Activated CD8-positive, alpha-beta memory T cell treated with anti-CD3 and anti-CD28 coated beads, Interleukin-2, amount 10 ng/mL, durations not matched to agents 7 days and 5 days (primary cell): ENCODE measurements at regions of chr6 and their contacts with region 1.

Region 1: DNA sequence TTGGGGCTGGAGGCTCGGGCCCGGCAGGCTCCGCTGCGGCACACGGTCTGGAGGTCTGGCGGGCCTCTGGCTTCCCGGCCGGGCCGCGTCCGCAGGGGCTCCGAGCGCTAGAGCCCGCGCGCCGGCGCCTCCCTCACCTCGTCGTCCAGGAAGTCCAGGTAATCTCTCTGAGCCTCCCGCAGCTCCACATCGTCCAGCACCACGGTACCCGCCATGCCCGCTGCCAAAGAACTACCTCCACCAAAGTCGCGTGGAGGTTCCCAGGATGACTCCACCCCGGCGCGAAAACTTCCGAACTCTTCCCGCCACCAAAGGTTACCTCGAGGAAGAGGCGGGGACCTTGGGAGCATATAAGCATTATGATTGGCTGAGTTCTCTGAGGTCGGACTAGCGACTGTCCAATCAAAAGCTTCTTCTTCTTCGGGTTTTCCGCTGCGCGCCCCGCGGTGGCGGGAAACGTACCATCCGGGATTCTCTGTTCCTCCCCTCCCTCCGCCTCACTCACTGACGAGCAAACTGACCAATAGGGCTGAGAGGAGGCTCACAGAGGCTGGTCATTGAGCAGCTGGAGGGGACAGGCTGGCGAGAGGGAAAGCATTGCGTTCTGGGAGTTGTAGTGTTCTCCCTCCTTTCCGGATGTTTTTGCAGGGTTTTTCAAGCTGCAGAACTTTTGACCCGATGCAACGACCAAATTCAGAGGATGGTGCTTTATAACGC is at the start of gene MCM3:
- DNase-seq: peak; percentile 99
- ATAC-seq: peak; percentile 97
- H3K4me3 Mint-ChIP-seq: no peak within 1 kb of the TSS
- H3K27ac Mint-ChIP-seq: peak within 1 kb of the TSS; percentile 42
- H3K4me1 Mint-ChIP-seq: peaks cover 54% of the 10 kb centered on the region
- H3K27me3 Mint-ChIP-seq: no peaks in the 10 kb centered on the region
- total RNA-seq, gene MCM3: 248 to 262 TPM

Region 2: GRCh38 chr6:52130440-52130839 is 154.2 kb before region 1 on chr6:
- CTCF ChIA-PET with region 1: no interaction called
- DNase-seq: no peak
- ATAC-seq: no peak
- H3K4me3 Mint-ChIP-seq: no peak overlapping the region
- H3K27ac Mint-ChIP-seq: no peak overlapping the region
- H3K4me1 Mint-ChIP-seq: no peaks in the 10 kb centered on the region
- H3K27me3 Mint-ChIP-seq: peaks cover 33% of the 10 kb centered on the region

Region 3: DNA sequence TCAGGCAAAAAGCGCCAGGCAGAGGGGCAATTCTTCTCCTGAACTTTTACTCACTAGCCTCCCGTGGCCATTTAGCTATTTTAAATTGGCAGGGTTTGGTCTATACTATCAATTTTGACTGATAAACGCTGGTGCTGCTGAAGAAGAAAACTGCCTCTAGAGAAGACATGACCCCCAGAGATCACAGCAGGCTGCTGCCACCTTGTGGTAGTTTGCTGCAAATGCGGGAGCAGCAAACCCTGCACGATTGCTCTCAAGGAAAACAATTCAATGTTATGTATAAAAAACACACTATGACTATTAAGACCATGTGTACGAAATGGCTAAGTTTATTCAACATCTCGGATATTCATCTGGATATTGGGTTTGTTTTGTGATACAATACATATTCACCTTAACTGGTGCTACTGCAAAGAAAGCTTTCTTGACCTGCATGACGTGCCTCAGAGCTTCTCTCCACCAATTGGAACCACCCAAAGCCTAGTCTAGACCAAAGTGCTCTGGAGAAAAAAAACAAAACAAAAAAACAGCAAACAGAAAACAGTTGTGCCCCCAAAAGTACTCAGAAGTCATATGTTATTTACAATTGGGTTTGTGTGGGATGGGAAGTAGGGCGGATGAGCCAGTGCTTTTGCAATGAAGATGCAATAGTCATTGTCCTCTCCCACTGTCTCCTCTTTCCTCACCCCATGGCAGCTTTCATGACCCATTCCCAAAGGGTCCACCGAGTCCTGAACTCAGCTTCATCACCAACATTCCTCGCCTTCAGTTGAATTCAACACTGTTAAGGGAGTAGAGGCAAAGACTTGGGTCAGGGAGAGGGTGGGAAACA is 20.7 kb before region 1 on chr6:
- CTCF ChIA-PET with region 1: interaction called, 26 read pairs
- DNase-seq: peak; percentile 81
- ATAC-seq: peak; percentile 73
- H3K4me3 Mint-ChIP-seq: no peak overlapping the region
- H3K27ac Mint-ChIP-seq: peak overlapping the region; percentile 7
- H3K4me1 Mint-ChIP-seq: peaks cover 12% of the 10 kb centered on the region
- H3K27me3 Mint-ChIP-seq: no peaks in the 10 kb centered on the region

Region 4: DNA sequence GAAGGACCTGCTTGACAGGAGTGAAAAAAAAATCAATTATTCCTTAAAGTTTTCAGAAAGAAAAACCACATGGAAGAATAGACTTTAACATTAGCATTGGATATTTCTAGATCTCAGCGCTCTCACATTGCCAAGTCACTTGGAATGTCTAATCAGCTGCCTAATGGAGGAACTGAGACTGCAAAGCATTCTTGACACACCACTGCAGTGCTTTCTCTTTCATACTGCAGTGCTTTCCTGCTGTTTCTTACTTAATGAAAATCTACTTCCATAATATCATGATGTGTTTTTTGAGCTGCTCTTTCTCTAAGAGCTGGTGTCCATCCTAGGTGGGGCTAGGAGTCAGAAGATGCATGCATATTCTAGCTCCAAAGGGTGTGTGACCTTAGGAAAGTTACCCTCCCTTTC is 20.4 kb after region 1 on chr6:
- CTCF ChIA-PET with region 1: interaction called, 21 read pairs
- DNase-seq: no peak
- ATAC-seq: peak; percentile 51
- H3K4me3 Mint-ChIP-seq: peak overlapping the region; percentile 37
- H3K27ac Mint-ChIP-seq: peak overlapping the region; percentile 79
- H3K4me1 Mint-ChIP-seq: peaks cover 53% of the 10 kb centered on the region
- H3K27me3 Mint-ChIP-seq: no peaks in the 10 kb centered on the region

Region 5: GRCh38 chr6:52325695-52326441 is 41.2 kb after region 1 on chr6:
- CTCF ChIA-PET with region 1: no interaction called
- DNase-seq: no peak
- ATAC-seq: no peak
- H3K4me3 Mint-ChIP-seq: no peak overlapping the region
- H3K27ac Mint-ChIP-seq: no peak overlapping the region
- H3K4me1 Mint-ChIP-seq: no peaks in the 10 kb centered on the region
- H3K27me3 Mint-ChIP-seq: peaks cover 3% of the 10 kb centered on the region

Region 6: GRCh38 chr6:52361945-52362442 is 77.4 kb after region 1 on chr6 and contains the start of gene PAQR8:
- CTCF ChIA-PET with region 1: interaction called, 71 read pairs
- DNase-seq: peak; percentile 80
- ATAC-seq: peak; percentile 92
- H3K4me3 Mint-ChIP-seq: peak within 1 kb of the TSS; percentile 98
- H3K27ac Mint-ChIP-seq: peak within 1 kb of the TSS; percentile 88
- H3K4me1 Mint-ChIP-seq: peaks cover 23% of the 10 kb centered on the region
- H3K27me3 Mint-ChIP-seq: no peaks in the 10 kb centered on the region
- total RNA-seq, gene PAQR8: 12.1 to 12.5 TPM

Region 7: DNA sequence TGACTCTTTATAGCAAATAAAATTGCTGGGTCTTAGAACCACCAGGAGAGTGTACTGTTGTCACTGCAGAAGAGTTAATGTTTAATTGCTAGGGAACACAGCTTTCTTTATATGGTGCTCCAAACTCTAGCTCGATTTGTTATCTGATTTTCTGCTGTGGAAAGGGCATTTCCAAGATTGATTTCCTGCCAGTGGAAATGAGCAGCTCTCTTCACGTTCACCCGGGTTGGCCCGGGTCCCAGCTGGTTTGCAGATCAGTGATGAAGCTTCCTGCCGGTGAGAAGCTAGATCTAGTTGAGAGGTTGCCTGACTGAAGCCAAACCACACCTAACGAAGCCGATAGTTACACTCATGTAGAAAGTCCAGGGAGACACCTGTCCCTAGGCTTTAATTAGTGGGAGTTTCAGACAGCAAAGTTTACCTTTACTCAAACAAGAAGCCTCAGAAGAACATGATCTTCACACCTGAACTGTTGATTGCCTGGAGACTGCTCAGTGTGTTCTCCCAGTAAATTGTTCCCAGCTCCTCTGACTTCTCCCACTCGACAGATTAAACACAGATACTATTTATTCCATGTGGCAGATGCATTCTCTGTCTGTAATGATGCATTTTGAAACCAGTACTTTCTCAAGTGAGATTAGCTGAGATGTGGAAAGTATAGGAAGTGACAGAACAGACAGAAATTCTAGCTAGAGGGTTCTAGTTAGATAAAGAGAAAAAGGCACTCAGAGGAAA is 105.2 kb after region 1 on chr6:
- CTCF ChIA-PET with region 1: interaction called, 132 read pairs
- DNase-seq: peak; percentile 76
- ATAC-seq: peak; percentile 65
- H3K4me3 Mint-ChIP-seq: peak overlapping the region; percentile 60
- H3K27ac Mint-ChIP-seq: peak overlapping the region; percentile 94
- H3K4me1 Mint-ChIP-seq: peaks cover 67% of the 10 kb centered on the region
- H3K27me3 Mint-ChIP-seq: no peaks in the 10 kb centered on the region

Region 8: GRCh38 chr6:52399511-52400312 is 115.1 kb after region 1 on chr6:
- CTCF ChIA-PET with region 1: interaction called, 132 read pairs
- DNase-seq: no peak
- ATAC-seq: peak; percentile 39
- H3K4me3 Mint-ChIP-seq: no peak overlapping the region
- H3K27ac Mint-ChIP-seq: peak overlapping the region; percentile 39
- H3K4me1 Mint-ChIP-seq: peaks cover 51% of the 10 kb centered on the region
- H3K27me3 Mint-ChIP-seq: peaks cover 4% of the 10 kb centered on the region

Region 9: GRCh38 chr6:52419809-52420670 is 135.4 kb after region 1 on chr6 and contains the start of gene EFHC1:
- CTCF ChIA-PET with region 1: interaction called, 18 read pairs
- DNase-seq: peak; percentile 98
- ATAC-seq: peak; percentile 90
- H3K4me3 Mint-ChIP-seq: no peak within 1 kb of the TSS
- H3K27ac Mint-ChIP-seq: no peak within 1 kb of the TSS
- H3K4me1 Mint-ChIP-seq: peaks cover 20% of the 10 kb centered on the region
- H3K27me3 Mint-ChIP-seq: no peaks in the 10 kb centered on the region
- total RNA-seq, gene EFHC1: 1.7 to 2.1 TPM